CD4-positive, alpha-beta memory T cell (primary cell): ENCODE measurements at regions of chr15 and their contacts with region 1.

Region 1: GRCh38 chr15:92077353-92078085 is 224.0 kb downstream of the SLCO3A1 start:
- DNase-seq: peak; percentile 48 to 58 (median 55)
- H3K4me3 ChIP-seq: no peak overlapping the region
- H3K4me3 Mint-ChIP-seq: no peak overlapping the region
- H3K27ac ChIP-seq: no peak overlapping the region
- H3K27ac Mint-ChIP-seq: peak overlapping the region in 2 of 7 donors; percentile 42 to 69
- H3K4me1 ChIP-seq: peaks cover 51% of the 10 kb centered on the region
- H3K4me1 Mint-ChIP-seq: peaks cover 32 to 59% (median 40%) of the 10 kb centered on the region in 4 donors
- H3K27me3 ChIP-seq: no peaks in the 10 kb centered on the region
- H3K27me3 Mint-ChIP-seq: no peaks in the 10 kb centered on the region

Region 2: GRCh38 chr15:91522663-91523332 is 554.7 kb before region 1 on chr15:
- CTCF ChIA-PET with region 1: no interaction called
- POLR2A ChIA-PET with region 1: no interaction called
- intact Hi-C with region 1: loop called (anchors 2 kb)
- DNase-seq: peak in 4 of 5 donors; percentile 37 to 52 (median 40)
- H3K4me3 ChIP-seq: no peak overlapping the region
- H3K4me3 Mint-ChIP-seq: peak overlapping the region in 3 of 8 donors; percentile 7 to 29 (median 12)
- H3K27ac ChIP-seq: no peak overlapping the region
- H3K27ac Mint-ChIP-seq: peak overlapping the region in 4 of 7 donors; percentile 23 to 68 (median 36)
- H3K4me1 ChIP-seq: peaks cover 25% of the 10 kb centered on the region
- H3K4me1 Mint-ChIP-seq: peaks cover 19 to 37% (median 24%) of the 10 kb centered on the region in 4 donors
- H3K27me3 ChIP-seq: no peaks in the 10 kb centered on the region
- H3K27me3 Mint-ChIP-seq: peaks cover 1 to 6% of the 10 kb centered on the region in 2 donors

Region 3: GRCh38 chr15:92011611-92012367 is 65.7 kb before region 1 on chr15:
- CTCF ChIA-PET with region 1: no interaction called
- POLR2A ChIA-PET with region 1: no interaction called
- intact Hi-C with region 1: no loop called
- DNase-seq: peak in 2 of 5 donors; percentile 7 to 18
- H3K4me3 ChIP-seq: no peak overlapping the region
- H3K4me3 Mint-ChIP-seq: peak overlapping the region; percentile 19 to 64 (median 38)
- H3K27ac ChIP-seq: no peak overlapping the region
- H3K27ac Mint-ChIP-seq: peak overlapping the region in 4 of 7 donors; percentile 3 to 52 (median 37)
- H3K4me1 ChIP-seq: peaks cover 51% of the 10 kb centered on the region
- H3K4me1 Mint-ChIP-seq: peaks cover 57 to 74% (median 63%) of the 10 kb centered on the region in 4 donors
- H3K27me3 ChIP-seq: no peaks in the 10 kb centered on the region
- H3K27me3 Mint-ChIP-seq: no peaks in the 10 kb centered on the region

Region 4: DNA sequence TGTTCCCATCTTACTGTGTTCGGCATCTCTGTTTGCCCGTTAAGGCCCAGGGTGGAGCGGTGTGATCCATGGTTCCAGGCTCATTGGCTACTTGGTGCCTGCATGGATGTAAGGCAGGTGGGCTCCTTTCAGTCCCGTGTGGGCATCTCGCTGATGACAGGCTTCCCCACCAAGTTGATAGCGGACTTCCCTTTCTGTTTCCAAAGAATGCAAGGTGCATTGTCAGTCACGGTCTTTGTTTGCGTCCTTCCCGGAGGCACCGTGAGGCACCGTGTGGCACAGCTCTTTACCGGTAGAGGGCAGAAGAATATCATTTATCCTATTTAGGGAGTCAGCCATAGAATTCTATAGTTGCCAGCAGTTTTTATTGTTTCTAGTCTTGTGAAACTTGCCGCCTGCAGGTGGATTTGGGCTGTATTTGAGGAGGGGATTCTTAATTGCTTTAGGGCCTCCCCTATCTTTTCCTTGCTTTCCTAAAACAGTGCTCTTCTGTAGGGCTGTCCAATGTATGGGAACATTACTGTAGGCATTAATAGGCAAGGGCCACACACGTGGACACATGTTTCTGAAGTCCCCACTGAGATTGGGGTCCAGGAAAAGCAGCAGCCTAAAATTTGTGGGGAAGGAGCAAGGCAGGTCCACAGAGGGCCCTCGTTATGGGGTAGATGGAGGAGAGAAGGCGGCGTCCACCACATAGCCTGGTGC is 20.1 kb after region 1 on chr15:
- CTCF ChIA-PET with region 1: interaction called, 13 read pairs
- POLR2A ChIA-PET with region 1: no interaction called
- intact Hi-C with region 1: no loop called
- DNase-seq: peak in 4 of 5 donors; percentile 42 to 48 (median 46)
- H3K4me3 ChIP-seq: no peak overlapping the region
- H3K4me3 Mint-ChIP-seq: peak overlapping the region in 6 of 8 donors; percentile 27 to 86 (median 54)
- H3K27ac ChIP-seq: no peak overlapping the region
- H3K27ac Mint-ChIP-seq: peak overlapping the region; percentile 5 to 93 (median 86)
- H3K4me1 ChIP-seq: peaks cover 50% of the 10 kb centered on the region
- H3K4me1 Mint-ChIP-seq: peaks cover 53 to 87% (median 60%) of the 10 kb centered on the region in 4 donors
- H3K27me3 ChIP-seq: no peaks in the 10 kb centered on the region
- H3K27me3 Mint-ChIP-seq: no peaks in the 10 kb centered on the region

Region 5: DNA sequence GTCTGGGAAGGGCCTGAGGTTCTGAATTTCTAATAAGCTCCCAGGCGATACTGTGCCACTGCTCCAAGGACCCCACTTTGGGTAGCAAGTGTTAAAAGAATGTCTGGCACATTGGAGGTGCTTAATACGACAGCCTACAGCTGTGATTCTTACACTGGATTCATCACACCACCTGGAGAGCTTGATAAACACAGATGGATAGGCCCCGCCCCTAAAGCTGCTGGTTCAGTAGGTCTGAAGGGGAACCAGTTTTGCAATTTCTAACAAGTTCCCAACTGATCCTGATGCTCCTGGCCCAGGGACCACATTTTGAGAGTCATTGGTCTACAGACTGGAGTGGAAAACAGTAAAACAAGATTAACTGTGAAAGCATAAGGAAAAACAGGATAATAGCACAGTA is 191.4 kb after region 1 on chr15:
- CTCF ChIA-PET with region 1: no interaction called
- POLR2A ChIA-PET with region 1: no interaction called
- intact Hi-C with region 1: no loop called
- DNase-seq: no peak
- H3K4me3 ChIP-seq: no peak overlapping the region
- H3K4me3 Mint-ChIP-seq: no peak overlapping the region
- H3K27ac ChIP-seq: no peak overlapping the region
- H3K27ac Mint-ChIP-seq: no peak overlapping the region
- H3K4me1 ChIP-seq: no peaks in the 10 kb centered on the region
- H3K4me1 Mint-ChIP-seq: no peaks in the 10 kb centered on the region
- H3K27me3 ChIP-seq: no peaks in the 10 kb centered on the region
- H3K27me3 Mint-ChIP-seq: peaks cover 6 to 23% of the 10 kb centered on the region in 2 donors